ENCODE measurements at regions of chr6 and their contacts with region 1.

Region 1: DNA sequence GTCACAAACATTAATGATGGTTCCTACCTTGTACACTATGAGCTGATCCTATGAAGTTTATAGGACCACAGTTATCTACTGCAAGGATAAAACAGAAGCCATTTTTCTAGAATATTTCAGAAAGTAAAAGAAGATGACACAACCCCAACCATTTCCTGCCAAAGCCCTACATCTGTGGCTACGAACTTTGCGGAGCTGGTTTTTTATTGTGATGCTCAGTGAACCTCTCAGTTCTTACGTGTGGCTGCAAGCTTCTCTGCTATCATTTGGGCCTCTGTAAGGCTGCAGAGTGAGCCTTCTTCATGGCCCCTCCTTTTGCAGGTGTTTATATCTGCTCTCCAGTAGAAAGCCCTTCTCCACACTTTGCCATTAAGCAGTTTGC is 17.8 kb upstream of the TAGAP start:
- DNase-seq: no peak
- ATAC-seq: peak; percentile 92
- H3K4me3 Mint-ChIP-seq: peak overlapping the region; percentile 75
- H3K27ac Mint-ChIP-seq: peak overlapping the region; percentile 96
- H3K4me1 Mint-ChIP-seq: peaks cover 69% of the 10 kb centered on the region
- H3K27me3 Mint-ChIP-seq: no peaks in the 10 kb centered on the region

Region 2: GRCh38 chr6:159008656-159009288 is 53.8 kb before region 1 on chr6:
- POLR2A ChIA-PET with region 1: no interaction called
- DNase-seq: peak; percentile 39
- ATAC-seq: peak; percentile 64
- H3K4me3 Mint-ChIP-seq: peak overlapping the region; percentile 33
- H3K27ac Mint-ChIP-seq: no peak overlapping the region
- H3K4me1 Mint-ChIP-seq: peaks cover 13% of the 10 kb centered on the region
- H3K27me3 Mint-ChIP-seq: no peaks in the 10 kb centered on the region

Region 3: DNA sequence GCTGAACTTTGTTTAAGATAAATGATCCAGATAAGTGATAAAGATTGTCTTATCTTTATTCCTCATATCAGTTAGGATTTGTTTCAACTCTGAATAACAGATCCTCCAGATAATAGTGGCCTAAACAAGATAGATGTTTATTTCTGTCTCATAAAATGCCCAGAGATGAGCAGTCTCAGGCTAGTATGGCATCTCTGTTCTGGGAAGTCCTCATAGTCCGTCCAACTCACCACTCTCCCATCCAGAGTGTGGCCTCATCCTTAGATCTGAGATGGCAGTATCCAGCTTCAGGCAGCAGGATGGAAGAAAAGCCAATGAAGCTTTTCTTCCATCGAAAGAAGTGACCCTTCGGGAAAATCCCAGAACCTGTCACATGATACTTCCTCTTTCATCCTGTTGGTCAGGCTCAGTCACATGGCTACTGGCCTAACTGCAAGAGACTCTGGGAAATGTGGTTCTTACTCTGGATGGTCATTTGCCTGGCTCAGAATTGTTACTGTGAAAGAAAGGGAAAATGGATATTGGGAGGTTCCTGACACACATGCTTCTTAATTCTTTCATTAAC is 11.6 kb after region 1 on chr6:
- POLR2A ChIA-PET with region 1: interaction called, 50 read pairs
- DNase-seq: no peak
- ATAC-seq: no peak
- H3K4me3 Mint-ChIP-seq: no peak overlapping the region
- H3K27ac Mint-ChIP-seq: no peak overlapping the region
- H3K4me1 Mint-ChIP-seq: peaks cover 44% of the 10 kb centered on the region
- H3K27me3 Mint-ChIP-seq: peaks cover 2% of the 10 kb centered on the region

Region 4: DNA sequence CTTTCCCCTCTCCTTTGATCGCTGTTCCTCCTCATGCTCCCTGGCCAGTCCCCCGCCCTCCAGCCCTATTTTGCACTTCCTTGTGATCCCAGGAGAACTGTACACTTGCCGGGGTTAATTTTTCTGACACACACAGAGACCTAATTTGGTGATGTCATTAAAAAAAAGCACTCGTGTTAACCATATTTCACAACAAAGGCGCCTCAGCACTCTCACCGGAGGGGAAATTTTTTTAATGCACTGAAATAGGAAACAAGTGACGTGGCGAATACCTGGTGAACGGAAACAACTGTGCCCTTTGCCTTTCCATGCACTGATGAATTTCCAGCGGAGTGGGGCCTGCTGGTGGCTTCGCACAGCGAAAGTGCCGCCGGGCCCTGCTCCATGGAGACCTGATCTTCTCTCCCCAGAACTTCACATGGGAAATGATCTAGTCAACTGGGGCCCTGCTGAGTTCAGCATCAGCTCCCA is 36.1 kb after region 1 on chr6:
- POLR2A ChIA-PET with region 1: interaction called, 37 read pairs
- DNase-seq: peak; percentile 58
- ATAC-seq: peak; percentile 60
- H3K4me3 Mint-ChIP-seq: peak overlapping the region; percentile 88
- H3K27ac Mint-ChIP-seq: peak overlapping the region; percentile 100
- H3K4me1 Mint-ChIP-seq: peaks cover 56% of the 10 kb centered on the region
- H3K27me3 Mint-ChIP-seq: no peaks in the 10 kb centered on the region

Region 5: DNA sequence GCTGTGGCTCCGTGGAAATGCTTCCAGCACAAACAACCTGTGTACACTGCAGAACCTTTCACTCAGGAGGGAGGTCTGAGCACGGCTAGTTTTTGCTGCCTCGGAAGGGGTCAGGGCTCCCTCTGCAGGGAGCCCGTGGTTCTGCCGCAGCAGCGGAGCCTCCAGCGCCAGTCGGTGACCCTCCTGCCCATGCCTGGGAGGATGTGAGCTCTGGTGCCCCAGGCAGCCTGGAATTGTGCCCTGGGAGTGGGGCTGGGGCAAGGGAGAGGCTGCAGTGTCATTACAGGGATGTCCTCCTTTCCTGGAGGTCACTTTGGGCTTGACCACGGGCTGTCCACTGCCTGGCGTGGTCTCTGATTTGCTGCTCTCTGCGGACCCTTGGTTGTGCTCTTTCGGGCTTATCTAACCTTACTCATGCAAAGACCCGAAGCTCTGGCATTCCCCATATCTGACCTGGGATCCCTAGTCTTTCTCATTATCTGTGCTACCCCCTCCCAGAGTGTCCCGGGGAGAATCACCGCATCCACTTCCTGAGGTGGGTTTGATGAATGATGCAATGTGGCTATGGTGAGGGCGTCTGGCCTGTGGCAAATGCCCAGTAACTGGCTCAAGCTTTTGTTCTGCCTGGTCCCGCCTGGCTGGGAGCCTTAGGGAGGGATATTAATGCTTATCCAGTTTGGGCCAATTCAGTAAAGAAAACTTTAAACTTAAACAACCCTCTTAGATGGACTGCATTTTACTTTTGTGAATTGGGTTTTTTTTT is 41.8 kb after region 1 on chr6:
- POLR2A ChIA-PET with region 1: interaction called, 37 read pairs
- DNase-seq: peak; percentile 85
- ATAC-seq: peak; percentile 61
- H3K4me3 Mint-ChIP-seq: peak overlapping the region; percentile 70
- H3K27ac Mint-ChIP-seq: peak overlapping the region; percentile 91
- H3K4me1 Mint-ChIP-seq: peaks cover 57% of the 10 kb centered on the region
- H3K27me3 Mint-ChIP-seq: no peaks in the 10 kb centered on the region

Region 6: GRCh38 chr6:159142531-159142930 is 80.0 kb after region 1 on chr6:
- POLR2A ChIA-PET with region 1: no interaction called
- DNase-seq: no peak
- ATAC-seq: no peak
- H3K4me3 Mint-ChIP-seq: no peak overlapping the region
- H3K27ac Mint-ChIP-seq: no peak overlapping the region
- H3K4me1 Mint-ChIP-seq: no peaks in the 10 kb centered on the region
- H3K27me3 Mint-ChIP-seq: peaks cover 41% of the 10 kb centered on the region

Measured in activated naive CD8-positive, alpha-beta T cell treated with anti-CD3 and anti-CD28 coated beads, Interleukin-2, amount 10 ng/mL, durations not matched to agents 7 days and 5 days (primary cell).